MCF 10A (cell line): ENCODE measurements at regions of chr6 and their contacts with region 1.

Region 1: GRCh38 chr6:47495954-47496545 is 18.5 kb downstream of the CD2AP start:
- DNase-seq: no peak
- H3K4me3 Mint-ChIP-seq: no peak overlapping the region
- H3K27ac Mint-ChIP-seq: no peak overlapping the region
- H3K4me1 Mint-ChIP-seq: peaks cover 7% of the 10 kb centered on the region
- H3K27me3 Mint-ChIP-seq: no peaks in the 10 kb centered on the region
- CTCF ChIP-seq: no peak

Region 2: DNA sequence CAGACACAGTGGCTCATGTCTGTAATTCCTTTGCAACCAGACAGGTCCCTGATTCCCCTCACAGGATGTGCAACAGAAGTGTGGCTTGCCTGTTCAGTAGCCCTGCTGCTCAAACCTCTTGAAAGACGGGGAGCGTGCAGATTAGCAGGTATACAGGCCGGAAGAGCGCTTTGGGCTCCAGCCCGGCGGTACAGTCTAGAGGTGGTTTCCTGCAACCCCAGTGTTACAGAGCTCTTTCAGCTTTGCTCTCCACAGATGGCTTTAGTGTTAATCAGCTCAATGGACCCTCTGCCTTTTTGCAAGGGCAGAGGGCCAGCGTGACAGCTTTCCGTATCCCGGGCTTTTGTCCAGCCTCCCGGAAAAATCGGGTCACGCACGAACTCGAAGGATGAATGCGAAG is 119.1 kb before region 1 on chr6:
- CTCF ChIA-PET with region 1: no interaction called
- POLR2A ChIA-PET with region 1: no interaction called
- intact Hi-C with region 1: no loop called
- DNase-seq: no peak
- H3K4me3 Mint-ChIP-seq: no peak overlapping the region
- H3K27ac Mint-ChIP-seq: no peak overlapping the region
- H3K4me1 Mint-ChIP-seq: peaks cover 7% of the 10 kb centered on the region
- H3K27me3 Mint-ChIP-seq: no peaks in the 10 kb centered on the region
- CTCF ChIP-seq: no peak

Region 3: GRCh38 chr6:47483853-47484546 is 12.1 kb before region 1 on chr6:
- CTCF ChIA-PET with region 1: interaction called, 4 read pairs
- POLR2A ChIA-PET with region 1: interaction called, 12 read pairs
- intact Hi-C with region 1: no loop called
- DNase-seq: peak; percentile 63
- H3K4me3 Mint-ChIP-seq: peak overlapping the region; percentile 52
- H3K27ac Mint-ChIP-seq: peak overlapping the region; percentile 88
- H3K4me1 Mint-ChIP-seq: peaks cover 54% of the 10 kb centered on the region
- H3K27me3 Mint-ChIP-seq: no peaks in the 10 kb centered on the region
- CTCF ChIP-seq: no peak